CD4-positive, alpha-beta memory T cell (primary cell): ENCODE measurements at regions of chr9 and their contacts with region 1.

Region 1: DNA sequence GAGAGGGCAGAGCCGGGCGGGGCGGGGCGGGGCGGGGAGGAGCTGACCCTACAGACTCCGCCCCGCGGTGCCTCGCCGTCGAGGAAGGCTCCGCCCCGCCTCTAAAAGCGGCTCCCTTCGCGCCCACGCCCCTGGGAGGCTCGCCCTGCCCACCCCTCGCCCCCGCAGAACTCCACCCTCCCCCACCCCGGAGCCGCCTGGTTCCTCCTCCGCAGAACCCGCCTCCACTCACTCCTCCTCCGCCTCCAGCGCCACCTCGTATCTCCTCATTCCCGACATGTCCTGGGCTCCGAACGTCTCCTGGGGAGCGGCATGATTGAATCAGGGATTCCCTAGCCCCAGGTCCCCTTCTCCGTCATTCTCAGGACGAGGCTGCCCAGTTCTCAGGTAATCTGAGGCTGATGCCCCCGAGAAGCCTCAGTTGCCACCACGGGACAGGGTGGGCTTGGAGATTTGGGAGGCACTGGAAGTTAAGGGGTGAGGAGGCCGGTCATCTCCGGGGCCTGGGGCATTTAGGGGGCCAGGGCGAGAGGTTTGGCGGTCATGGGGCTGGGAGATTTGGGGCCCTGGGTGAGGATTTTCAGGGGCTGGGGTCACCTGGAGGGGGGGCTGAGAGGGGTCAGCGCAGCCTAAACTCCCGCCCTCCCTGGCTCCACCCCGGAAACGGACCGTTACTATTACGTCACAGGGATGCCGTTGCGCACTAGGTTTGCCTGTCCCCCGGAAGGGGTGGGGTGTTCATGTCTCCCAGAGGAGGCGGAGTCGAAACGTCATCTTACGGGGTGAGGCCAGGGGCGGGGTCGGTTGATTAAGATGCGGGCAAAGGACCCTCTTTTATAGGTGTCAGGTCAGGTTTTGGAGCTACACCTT is 3.2 kb upstream of the CCL27 start:
- DNase-seq: peak; percentile 87 to 94 (median 89)
- H3K4me3 ChIP-seq: peak overlapping the region; percentile 75 to 95
- H3K4me3 Mint-ChIP-seq: peak overlapping the region; percentile 85 to 97 (median 93)
- H3K27ac ChIP-seq: peak overlapping the region; percentile 98
- H3K27ac Mint-ChIP-seq: peak overlapping the region; percentile 95 to 99 (median 99)
- H3K4me1 ChIP-seq: peaks cover 59% of the 10 kb centered on the region
- H3K4me1 Mint-ChIP-seq: peaks cover 41 to 65% (median 53%) of the 10 kb centered on the region in 4 donors
- H3K27me3 ChIP-seq: no peaks in the 10 kb centered on the region
- H3K27me3 Mint-ChIP-seq: no peaks in the 10 kb centered on the region

Region 2: DNA sequence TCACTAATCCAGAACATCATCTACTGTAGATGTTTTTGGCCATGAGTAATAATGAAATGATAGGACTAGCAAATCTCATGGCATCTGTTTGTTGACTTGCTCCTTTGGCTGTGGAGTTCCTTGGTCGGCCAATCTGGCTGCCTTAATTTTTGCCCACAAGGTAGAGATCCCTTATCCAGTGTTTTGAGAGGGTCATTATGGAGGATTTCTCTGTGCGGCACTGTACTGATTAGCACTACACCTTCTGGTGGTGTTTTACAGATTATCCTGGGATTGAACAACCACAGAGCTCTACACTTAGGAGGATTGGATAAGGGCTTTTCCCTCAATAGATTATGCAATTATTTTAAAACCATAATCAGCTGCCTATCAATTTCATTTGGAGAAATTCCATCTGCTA is 139.6 kb before region 1 on chr9:
- CTCF ChIA-PET with region 1: no interaction called
- POLR2A ChIA-PET with region 1: no interaction called
- intact Hi-C with region 1: no loop called
- DNase-seq: no peak
- H3K4me3 ChIP-seq: no peak overlapping the region
- H3K4me3 Mint-ChIP-seq: no peak overlapping the region
- H3K27ac ChIP-seq: no peak overlapping the region
- H3K27ac Mint-ChIP-seq: no peak overlapping the region
- H3K4me1 ChIP-seq: peaks cover 12% of the 10 kb centered on the region
- H3K4me1 Mint-ChIP-seq: peaks cover 6 to 13% (median 8%) of the 10 kb centered on the region in 4 donors
- H3K27me3 ChIP-seq: no peaks in the 10 kb centered on the region
- H3K27me3 Mint-ChIP-seq: peaks cover 11 to 17% of the 10 kb centered on the region in 2 donors

Region 3: GRCh38 chr9:34611829-34612630 is 53.6 kb before region 1 on chr9 and contains the start of gene RPP25L:
- CTCF ChIA-PET with region 1: interaction called, 4 read pairs
- POLR2A ChIA-PET with region 1: interaction called, 5 read pairs
- intact Hi-C with region 1: loop called (anchors 2 kb)
- DNase-seq: peak; percentile 83 to 89 (median 86)
- H3K4me3 ChIP-seq: peak within 1 kb of the TSS; percentile 81 to 88
- H3K4me3 Mint-ChIP-seq: peak within 1 kb of the TSS; percentile 87 to 99 (median 92)
- H3K27ac ChIP-seq: peak within 1 kb of the TSS; percentile 71
- H3K27ac Mint-ChIP-seq: peak within 1 kb of the TSS; percentile 83 to 97 (median 96)
- H3K4me1 ChIP-seq: peaks cover 19% of the 10 kb centered on the region
- H3K4me1 Mint-ChIP-seq: peaks cover 7 to 35% (median 25%) of the 10 kb centered on the region in 4 donors
- H3K27me3 ChIP-seq: no peaks in the 10 kb centered on the region
- H3K27me3 Mint-ChIP-seq: no peaks in the 10 kb centered on the region
- total RNA-seq, gene RPP25L: 28.5 to 28.9 TPM

Region 4: DNA sequence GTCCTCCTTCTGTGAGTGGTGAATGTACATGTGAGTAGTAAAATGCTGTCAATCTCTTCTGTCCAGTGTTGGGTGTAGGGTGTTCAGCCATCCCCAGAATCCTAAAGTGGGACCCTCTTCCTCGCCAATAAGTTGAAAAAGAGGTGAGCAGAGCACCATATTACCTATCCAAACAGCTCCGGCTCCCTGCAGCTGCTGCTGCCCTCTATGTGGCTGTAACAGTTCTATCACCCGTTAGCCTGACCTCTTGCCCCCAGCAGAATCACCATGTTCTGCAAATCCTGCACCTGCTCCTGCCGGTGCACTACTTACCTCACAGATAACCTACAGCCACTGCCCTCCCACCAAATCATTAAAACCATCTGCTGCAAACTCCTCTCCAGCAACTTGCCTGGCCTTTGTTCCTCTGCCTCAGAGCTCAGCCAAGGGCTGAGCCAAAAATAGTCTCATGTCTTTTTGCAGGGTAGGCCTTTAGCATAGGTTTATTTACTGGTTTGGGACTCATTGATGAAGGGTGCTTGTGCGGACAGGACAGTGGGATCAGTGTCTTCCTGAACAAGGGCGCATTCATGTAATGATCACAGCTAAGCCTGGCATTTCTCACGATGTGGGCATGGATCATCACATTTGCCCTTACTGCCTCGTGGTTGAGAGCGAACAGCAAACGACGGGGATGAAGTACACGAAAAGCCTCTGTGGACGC is 94.0 kb after region 1 on chr9:
- CTCF ChIA-PET with region 1: no interaction called
- POLR2A ChIA-PET with region 1: no interaction called
- intact Hi-C with region 1: no loop called
- DNase-seq: no peak
- H3K4me3 ChIP-seq: no peak overlapping the region
- H3K4me3 Mint-ChIP-seq: no peak overlapping the region
- H3K27ac ChIP-seq: no peak overlapping the region
- H3K27ac Mint-ChIP-seq: no peak overlapping the region
- H3K4me1 ChIP-seq: peaks cover 4% of the 10 kb centered on the region
- H3K4me1 Mint-ChIP-seq: peaks cover 1 to 8% (median 5%) of the 10 kb centered on the region in 4 donors
- H3K27me3 ChIP-seq: no peaks in the 10 kb centered on the region
- H3K27me3 Mint-ChIP-seq: peaks cover 20 to 25% of the 10 kb centered on the region in 2 donors